Breast epithelium (tissue), 4 donors: ENCODE measurements at regions of chr2 and their contacts with region 1.

Region 1: GRCh38 chr2:221156062-221156742 is 415.9 kb downstream of the EPHA4 start:
- DNase-seq: no peak
- H3K4me3 ChIP-seq: no peak overlapping the region
- H3K27ac ChIP-seq: no peak overlapping the region
- H3K4me1 ChIP-seq: no peaks in the 10 kb centered on the region
- H3K27me3 ChIP-seq: no peaks in the 10 kb centered on the region
- CTCF ChIP-seq: no peak
- POLR2A ChIP-seq: no peak

Region 2: DNA sequence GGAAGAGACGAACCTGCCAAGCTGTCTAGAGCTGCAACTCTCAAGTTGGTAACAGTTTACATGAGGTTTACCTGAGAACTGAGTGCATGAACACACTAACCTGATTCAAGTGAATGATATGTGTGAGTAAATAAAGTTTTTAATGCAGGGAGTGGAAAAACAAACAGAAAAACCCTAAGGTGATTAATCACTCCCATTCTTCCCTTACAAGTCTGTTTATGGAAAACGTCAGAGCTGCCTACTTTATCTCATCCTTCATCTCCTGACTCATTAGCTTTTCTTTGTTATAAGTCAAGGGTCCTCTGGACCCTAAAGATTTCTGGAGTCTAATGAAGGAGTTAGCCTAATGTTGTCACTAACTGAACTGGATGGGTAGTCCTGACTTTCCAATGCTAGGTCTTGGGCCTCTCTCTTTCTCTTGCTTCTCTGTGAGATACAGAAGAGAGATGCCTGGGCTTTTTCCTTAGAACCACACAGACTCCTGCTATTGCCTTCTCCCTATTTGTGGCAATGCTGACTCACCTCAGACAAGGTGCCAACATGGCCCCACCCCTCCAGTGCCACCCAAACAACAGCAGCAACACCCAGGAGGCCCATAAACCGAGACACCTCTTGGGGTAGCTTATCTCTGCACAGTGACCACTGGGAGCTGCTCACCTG is 536.5 kb before region 1 on chr2:
- intact Hi-C with region 1: loop called (anchors 5 kb)
- DNase-seq: no peak
- H3K4me3 ChIP-seq: no peak overlapping the region
- H3K27ac ChIP-seq: no peak overlapping the region
- H3K4me1 ChIP-seq: no peaks in the 10 kb centered on the region
- H3K27me3 ChIP-seq: no peaks in the 10 kb centered on the region
- CTCF ChIP-seq: no peak
- POLR2A ChIP-seq: no peak

Region 3: GRCh38 chr2:221104361-221104811 is 51.8 kb before region 1 on chr2:
- intact Hi-C with region 1: no loop called
- DNase-seq: peak in 1 of 2 donors; percentile 38
- H3K4me3 ChIP-seq: peak overlapping the region in 2 of 3 donors; percentile 18 to 49
- H3K27ac ChIP-seq: peak overlapping the region in 1 of 2 donors; percentile 66
- H3K4me1 ChIP-seq: no peaks in the 10 kb centered on the region
- H3K27me3 ChIP-seq: no peaks in the 10 kb centered on the region
- CTCF ChIP-seq: no peak
- POLR2A ChIP-seq: no peak

Region 4: GRCh38 chr2:221186873-221187272 is 30.7 kb after region 1 on chr2:
- intact Hi-C with region 1: no loop called
- DNase-seq: no peak
- H3K4me3 ChIP-seq: no peak overlapping the region
- H3K27ac ChIP-seq: no peak overlapping the region
- H3K4me1 ChIP-seq: no peaks in the 10 kb centered on the region
- H3K27me3 ChIP-seq: no peaks in the 10 kb centered on the region
- CTCF ChIP-seq: no peak
- POLR2A ChIP-seq: no peak

Region 5: DNA sequence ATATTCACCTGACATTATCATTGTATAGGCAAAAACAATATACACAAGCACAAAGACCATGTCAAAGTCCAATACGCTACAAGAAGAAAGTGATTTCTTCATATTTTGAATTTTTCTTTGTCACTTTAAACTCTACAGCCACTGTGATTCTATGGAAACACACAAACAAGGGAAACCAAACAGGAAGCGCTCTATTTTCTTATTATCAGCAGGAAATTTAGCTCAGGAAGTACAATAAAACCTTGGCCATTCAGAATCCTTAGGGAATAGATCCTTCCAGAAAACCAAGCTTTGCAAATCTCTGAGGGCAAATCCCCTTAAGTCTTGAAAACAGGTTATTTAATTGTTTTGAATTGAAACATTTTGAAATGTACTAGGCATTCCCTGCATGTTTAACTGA is 79.7 kb after region 1 on chr2:
- intact Hi-C with region 1: no loop called
- DNase-seq: no peak
- H3K4me3 ChIP-seq: no peak overlapping the region
- H3K27ac ChIP-seq: no peak overlapping the region
- H3K4me1 ChIP-seq: no peaks in the 10 kb centered on the region
- H3K27me3 ChIP-seq: no peaks in the 10 kb centered on the region
- CTCF ChIP-seq: no peak
- POLR2A ChIP-seq: no peak